MCF 10A (cell line): ENCODE measurements at regions of chr5 and their contacts with region 1.

Region 1: GRCh38 chr5:113513384-113514288 is at the start of gene YTHDC2:
- DNase-seq: peak; percentile 82
- H3K4me3 Mint-ChIP-seq: peak within 1 kb of the TSS; percentile 89
- H3K27ac Mint-ChIP-seq: peak within 1 kb of the TSS; percentile 91
- H3K4me1 Mint-ChIP-seq: peaks cover 40% of the 10 kb centered on the region
- H3K27me3 Mint-ChIP-seq: no peaks in the 10 kb centered on the region
- CTCF ChIP-seq: peak; percentile 8
- total RNA-seq, gene YTHDC2: 22.2 and 24.6 TPM in 2 replicates

Region 2: GRCh38 chr5:112976432-112977309 is 537.0 kb before region 1 on chr5 and contains the start of gene DCP2:
- CTCF ChIA-PET with region 1: no interaction called
- POLR2A ChIA-PET with region 1: interaction called, 4 read pairs
- intact Hi-C with region 1: loop called (anchors 5 kb)
- DNase-seq: peak; percentile 99
- H3K4me3 Mint-ChIP-seq: peak within 1 kb of the TSS; percentile 97
- H3K27ac Mint-ChIP-seq: peak within 1 kb of the TSS; percentile 98
- H3K4me1 Mint-ChIP-seq: peaks cover 15% of the 10 kb centered on the region
- H3K27me3 Mint-ChIP-seq: no peaks in the 10 kb centered on the region
- CTCF ChIP-seq: no peak
- total RNA-seq, gene DCP2: 32.7 and 34.1 TPM in 2 replicates

Region 3: GRCh38 chr5:113123618-113124017 is 390.0 kb before region 1 on chr5:
- CTCF ChIA-PET with region 1: interaction called, 4 read pairs
- POLR2A ChIA-PET with region 1: interaction called, 3 read pairs
- intact Hi-C with region 1: loop called (anchors 1 kb)
- DNase-seq: peak; percentile 31
- H3K4me3 Mint-ChIP-seq: no peak overlapping the region
- H3K27ac Mint-ChIP-seq: no peak overlapping the region
- H3K4me1 Mint-ChIP-seq: no peaks in the 10 kb centered on the region
- H3K27me3 Mint-ChIP-seq: no peaks in the 10 kb centered on the region
- CTCF ChIP-seq: no peak

Region 4: DNA sequence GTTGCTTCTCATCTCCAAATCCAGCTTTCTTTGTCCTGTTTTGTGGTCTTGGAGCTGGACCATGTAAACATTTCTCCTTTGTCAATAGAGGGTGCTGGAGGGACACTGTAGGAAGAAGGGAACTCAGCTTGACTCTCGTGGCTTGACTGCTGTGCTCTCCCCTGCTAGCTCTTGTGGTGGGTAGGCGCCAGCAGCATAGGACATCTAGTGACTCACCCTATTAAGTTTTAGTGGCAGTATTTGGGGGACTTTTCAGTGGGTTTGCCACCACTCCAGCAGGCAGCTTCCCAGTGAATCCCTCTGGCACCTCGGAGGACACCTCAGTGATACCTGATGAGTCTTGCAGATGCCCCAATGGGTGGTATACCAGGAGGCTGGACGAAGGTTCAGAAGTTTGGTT is 176.7 kb before region 1 on chr5:
- CTCF ChIA-PET with region 1: interaction called, 77 read pairs
- POLR2A ChIA-PET with region 1: interaction called, 23 read pairs
- intact Hi-C with region 1: loop called (anchors 1 kb)
- DNase-seq: peak; percentile 81
- H3K4me3 Mint-ChIP-seq: no peak overlapping the region
- H3K27ac Mint-ChIP-seq: no peak overlapping the region
- H3K4me1 Mint-ChIP-seq: peaks cover 6% of the 10 kb centered on the region
- H3K27me3 Mint-ChIP-seq: no peaks in the 10 kb centered on the region
- CTCF ChIP-seq: peak; percentile 45

Region 5: GRCh38 chr5:113487781-113488644 is 25.6 kb before region 1 on chr5 and contains the start of gene MCC:
- CTCF ChIA-PET with region 1: interaction called, 40 read pairs
- POLR2A ChIA-PET with region 1: interaction called, 37 read pairs
- intact Hi-C with region 1: no loop called
- DNase-seq: peak; percentile 80
- H3K4me3 Mint-ChIP-seq: peak within 1 kb of the TSS; percentile 90
- H3K27ac Mint-ChIP-seq: peak within 1 kb of the TSS; percentile 82
- H3K4me1 Mint-ChIP-seq: peaks cover 20% of the 10 kb centered on the region
- H3K27me3 Mint-ChIP-seq: no peaks in the 10 kb centered on the region
- CTCF ChIP-seq: no peak
- total RNA-seq, gene MCC: 25.3 and 28.2 TPM in 2 replicates

Region 6: GRCh38 chr5:113606298-113607134 is 92.9 kb after region 1 on chr5:
- CTCF ChIA-PET with region 1: interaction called, 4 read pairs
- POLR2A ChIA-PET with region 1: no interaction called
- intact Hi-C with region 1: loop called (anchors 1 kb)
- DNase-seq: peak; percentile 70
- H3K4me3 Mint-ChIP-seq: no peak overlapping the region
- H3K27ac Mint-ChIP-seq: no peak overlapping the region
- H3K4me1 Mint-ChIP-seq: no peaks in the 10 kb centered on the region
- H3K27me3 Mint-ChIP-seq: no peaks in the 10 kb centered on the region
- CTCF ChIP-seq: peak; percentile 91